ENCODE measurements at regions of chr20 and their contacts with region 1.

Region 1: GRCh38 chr20:31630187-31630790 is 7.4 kb upstream of the COX4I2 start:
- DNase-seq: no peak
- H3K4me3 ChIP-seq: no peak overlapping the region
- H3K27ac ChIP-seq: no peak overlapping the region
- H3K27me3 ChIP-seq: no peaks in the 10 kb centered on the region
- CTCF ChIP-seq: no peak

Region 2: GRCh38 chr20:31484001-31484400 is 146.3 kb before region 1 on chr20:
- CTCF ChIA-PET with region 1: no interaction called
- POLR2A ChIA-PET with region 1: no interaction called
- DNase-seq: no peak
- H3K4me3 ChIP-seq: no peak overlapping the region
- H3K27ac ChIP-seq: no peak overlapping the region
- H3K27me3 ChIP-seq: peaks cover 3% of the 10 kb centered on the region
- CTCF ChIP-seq: no peak

Region 3: DNA sequence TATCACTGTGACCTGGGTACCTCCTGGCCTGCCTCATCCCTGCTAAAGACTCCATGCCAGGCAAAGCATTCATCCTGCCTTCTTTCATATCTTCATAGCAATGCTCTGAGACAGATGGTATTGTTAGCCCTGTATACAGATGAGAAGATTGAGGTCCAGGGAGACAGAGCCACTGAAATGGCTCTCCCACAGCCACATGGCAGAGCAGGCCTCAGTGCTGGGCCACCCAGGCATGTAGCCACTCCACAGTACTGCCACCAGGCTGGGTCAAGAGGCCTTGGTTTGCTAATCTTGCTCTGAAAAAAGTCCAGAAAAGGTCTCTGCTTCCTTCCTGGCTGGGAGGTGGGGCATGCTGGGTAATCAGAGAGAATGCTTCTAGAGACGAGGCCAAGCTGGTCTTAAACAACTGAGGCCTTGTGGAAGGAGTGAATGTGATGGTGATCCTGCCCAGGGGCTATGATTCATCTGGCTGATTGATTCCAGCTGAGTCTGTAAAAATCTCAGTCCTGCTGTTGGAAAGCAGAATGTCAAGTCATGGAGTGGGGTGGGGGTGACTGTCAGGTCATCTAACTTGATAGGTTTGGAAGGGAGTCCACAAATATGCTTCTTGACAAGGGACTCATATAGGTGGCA is 86.2 kb before region 1 on chr20:
- CTCF ChIA-PET with region 1: no interaction called
- POLR2A ChIA-PET with region 1: no interaction called
- DNase-seq: peak; percentile 92
- H3K4me3 ChIP-seq: no peak overlapping the region
- H3K27ac ChIP-seq: peak overlapping the region; percentile 98
- H3K27me3 ChIP-seq: no peaks in the 10 kb centered on the region
- CTCF ChIP-seq: no peak

Region 4: GRCh38 chr20:31555203-31555775 is 75.0 kb before region 1 on chr20:
- CTCF ChIA-PET with region 1: interaction called, 10 read pairs
- POLR2A ChIA-PET with region 1: no interaction called
- DNase-seq: no peak
- H3K4me3 ChIP-seq: no peak overlapping the region
- H3K27ac ChIP-seq: peak overlapping the region; percentile 21
- H3K27me3 ChIP-seq: no peaks in the 10 kb centered on the region
- CTCF ChIP-seq: no peak

Region 5: DNA sequence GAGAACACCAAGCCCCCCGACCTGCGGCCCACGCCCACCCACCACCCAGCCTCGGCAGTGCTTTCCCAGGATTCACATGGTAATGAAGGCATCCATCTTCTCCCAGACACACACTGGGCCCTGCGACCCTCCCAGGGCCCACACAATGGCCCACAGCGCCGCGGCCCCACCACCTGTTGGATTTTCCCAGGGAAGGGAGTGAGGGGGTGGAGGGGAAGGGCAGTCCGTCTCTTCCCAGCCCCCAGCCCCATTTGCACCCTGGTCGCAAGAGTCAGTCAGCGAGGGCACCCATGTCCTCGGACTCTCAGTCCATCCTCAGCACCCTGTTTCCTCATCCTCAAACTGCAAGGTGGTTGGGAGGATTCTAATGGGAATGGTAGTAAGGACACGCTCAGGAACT is 48.9 kb before region 1 on chr20:
- CTCF ChIA-PET with region 1: no interaction called
- POLR2A ChIA-PET with region 1: no interaction called
- DNase-seq: no peak
- H3K4me3 ChIP-seq: no peak overlapping the region
- H3K27ac ChIP-seq: no peak overlapping the region
- H3K27me3 ChIP-seq: no peaks in the 10 kb centered on the region
- CTCF ChIP-seq: no peak

Region 6: DNA sequence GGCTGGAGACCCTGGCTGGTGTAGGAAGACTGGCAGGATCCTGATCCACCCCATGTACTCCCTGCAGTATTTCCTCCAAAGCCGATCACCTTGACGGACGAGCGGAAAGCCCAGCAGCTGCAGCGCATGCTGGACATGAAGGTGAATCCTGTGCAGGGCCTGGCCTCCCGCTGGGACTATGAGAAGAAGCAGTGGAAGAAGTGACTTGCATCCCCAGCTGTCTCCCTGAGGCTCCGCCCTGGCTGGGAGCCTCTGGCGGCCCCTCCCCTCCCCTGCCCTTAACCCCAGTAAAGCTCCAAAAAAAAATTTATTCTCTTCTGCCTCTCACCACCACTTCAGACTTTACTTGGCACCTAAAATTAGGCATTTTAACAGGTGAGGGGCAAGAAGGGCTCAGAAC is 14.4 kb after region 1 on chr20:
- CTCF ChIA-PET with region 1: interaction called, 10 read pairs
- POLR2A ChIA-PET with region 1: interaction called, 7 read pairs
- DNase-seq: no peak
- H3K4me3 ChIP-seq: no peak overlapping the region
- H3K27ac ChIP-seq: no peak overlapping the region
- H3K27me3 ChIP-seq: peaks cover 19% of the 10 kb centered on the region
- CTCF ChIP-seq: no peak